CD4-positive, alpha-beta T cell (primary cell): ENCODE measurements at regions of chr15 and their contacts with region 1.

Region 1: GRCh38 chr15:85380217-85380811 is at the start of gene AKAP13:
- DNase-seq: peak; percentile 81 to 99 (median 92)
- ATAC-seq: peak; percentile 74
- H3K4me3 ChIP-seq: peak within 1 kb of the TSS; percentile 67
- H3K4me3 Mint-ChIP-seq: peak within 1 kb of the TSS; percentile 92
- H3K27ac ChIP-seq: peak within 1 kb of the TSS; percentile 63 to 74
- H3K27ac Mint-ChIP-seq: peak within 1 kb of the TSS; percentile 88
- H3K4me1 ChIP-seq: peaks cover 36% of the 10 kb centered on the region
- H3K4me1 Mint-ChIP-seq: peaks cover 46% of the 10 kb centered on the region
- H3K27me3 ChIP-seq: no peaks in the 10 kb centered on the region
- H3K27me3 Mint-ChIP-seq: no peaks in the 10 kb centered on the region
- CTCF ChIP-seq: no peak
- total RNA-seq, gene AKAP13: 282 to 304 TPM

Region 2: GRCh38 chr15:85330901-85331588 is 49.3 kb before region 1 on chr15:
- CTCF ChIA-PET with region 1: interaction called, 11 read pairs
- POLR2A ChIA-PET with region 1: interaction called, 70 read pairs
- intact Hi-C with region 1: loop called (anchors 2 to 5 kb)
- DNase-seq: peak; percentile 46 to 88 (median 60)
- ATAC-seq: peak; percentile 71
- H3K4me3 ChIP-seq: peak overlapping the region; percentile 47
- H3K4me3 Mint-ChIP-seq: peak overlapping the region; percentile 96
- H3K27ac ChIP-seq: peak overlapping the region; percentile 43 to 60
- H3K27ac Mint-ChIP-seq: peak overlapping the region; percentile 85
- H3K4me1 ChIP-seq: peaks cover 30% of the 10 kb centered on the region
- H3K4me1 Mint-ChIP-seq: peaks cover 58% of the 10 kb centered on the region
- H3K27me3 ChIP-seq: no peaks in the 10 kb centered on the region
- H3K27me3 Mint-ChIP-seq: no peaks in the 10 kb centered on the region
- CTCF ChIP-seq: peak; percentile 57

Region 3: DNA sequence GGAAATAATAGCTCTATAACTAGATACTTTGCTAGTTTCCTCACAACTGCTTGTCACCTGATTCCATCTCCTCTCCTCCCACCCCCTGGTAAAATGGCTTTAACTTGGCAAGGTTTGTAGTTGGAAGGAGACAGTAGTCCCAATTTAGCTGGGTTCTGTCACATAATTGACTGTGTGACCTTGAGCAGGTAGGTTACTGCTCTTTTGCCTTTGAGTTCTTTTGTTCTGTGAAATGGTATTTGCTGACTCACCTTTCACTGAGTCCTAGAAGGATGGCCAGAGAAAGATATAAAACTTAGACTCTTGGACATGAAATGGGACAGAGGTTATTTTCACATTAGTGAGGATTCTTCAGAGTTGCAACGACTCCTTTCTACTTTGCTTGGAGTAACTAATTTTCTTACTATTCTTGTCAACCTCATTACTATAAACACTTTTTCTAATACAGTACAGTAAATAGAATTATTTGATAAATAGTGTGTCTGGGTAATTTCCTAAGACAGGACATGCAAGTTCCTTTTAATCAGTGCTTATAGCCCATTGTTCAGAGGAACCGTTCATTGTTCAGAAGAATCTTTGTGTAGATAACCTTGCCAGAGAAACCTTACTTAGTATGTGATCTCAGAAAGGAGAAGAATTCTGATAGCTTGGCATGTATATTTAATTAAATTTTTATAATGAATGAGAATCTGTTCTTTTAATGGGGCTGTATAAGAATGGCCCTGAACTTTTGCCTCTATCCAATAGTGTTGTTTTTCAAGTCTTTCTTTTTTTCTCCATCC is 14.4 kb after region 1 on chr15:
- CTCF ChIA-PET with region 1: interaction called, 3 read pairs
- POLR2A ChIA-PET with region 1: interaction called, 14 read pairs
- intact Hi-C with region 1: no loop called
- DNase-seq: no peak
- ATAC-seq: no peak
- H3K4me3 ChIP-seq: no peak overlapping the region
- H3K4me3 Mint-ChIP-seq: no peak overlapping the region
- H3K27ac ChIP-seq: no peak overlapping the region
- H3K27ac Mint-ChIP-seq: no peak overlapping the region
- H3K4me1 ChIP-seq: no peaks in the 10 kb centered on the region
- H3K4me1 Mint-ChIP-seq: peaks cover 66% of the 10 kb centered on the region
- H3K27me3 ChIP-seq: no peaks in the 10 kb centered on the region
- H3K27me3 Mint-ChIP-seq: no peaks in the 10 kb centered on the region
- CTCF ChIP-seq: no peak

Region 4: DNA sequence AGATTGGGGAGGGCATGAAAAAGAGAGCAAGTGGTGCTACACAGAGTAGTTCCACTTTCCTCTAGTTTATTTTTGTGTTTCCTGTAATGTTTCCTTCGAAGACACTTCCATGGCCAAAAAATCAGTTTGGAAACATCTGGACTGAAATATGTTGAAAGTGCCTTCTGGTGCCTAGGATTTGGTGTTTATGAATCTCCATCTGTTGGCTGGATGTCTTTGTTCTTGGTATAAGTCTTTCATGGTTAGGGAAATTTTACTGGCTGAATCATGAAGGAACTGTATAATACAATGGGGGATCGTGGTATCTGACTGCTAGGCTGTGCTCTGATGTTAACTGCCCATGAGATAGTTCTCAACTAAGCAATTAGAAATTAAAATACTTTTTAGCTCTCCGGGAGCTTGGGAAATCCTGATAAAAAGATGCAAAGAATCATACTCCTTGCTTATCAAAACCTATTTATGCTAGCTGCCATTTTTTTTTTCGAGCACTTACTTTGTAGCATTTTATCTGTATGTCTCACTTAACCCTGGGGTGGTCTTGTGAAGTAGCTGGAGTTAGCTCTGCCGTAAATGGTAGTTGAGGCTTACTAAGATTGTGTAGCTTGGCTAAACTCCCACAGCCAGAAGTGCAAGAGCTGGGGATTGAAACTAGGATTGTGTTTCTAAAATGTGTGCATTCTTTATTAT is 22.0 kb after region 1 on chr15:
- CTCF ChIA-PET with region 1: interaction called, 3 read pairs
- POLR2A ChIA-PET with region 1: interaction called, 15 read pairs
- intact Hi-C with region 1: no loop called
- DNase-seq: peak in 1 of 14 experiments; percentile 25
- ATAC-seq: no peak
- H3K4me3 ChIP-seq: no peak overlapping the region
- H3K4me3 Mint-ChIP-seq: no peak overlapping the region
- H3K27ac ChIP-seq: no peak overlapping the region
- H3K27ac Mint-ChIP-seq: peak overlapping the region; percentile 31
- H3K4me1 ChIP-seq: peaks cover 30% of the 10 kb centered on the region
- H3K4me1 Mint-ChIP-seq: peaks cover 90% of the 10 kb centered on the region
- H3K27me3 ChIP-seq: no peaks in the 10 kb centered on the region
- H3K27me3 Mint-ChIP-seq: no peaks in the 10 kb centered on the region
- CTCF ChIP-seq: no peak

Region 5: GRCh38 chr15:85407804-85408746 is 27.8 kb after region 1 on chr15:
- CTCF ChIA-PET with region 1: interaction called, 6 read pairs
- POLR2A ChIA-PET with region 1: interaction called, 48 read pairs
- intact Hi-C with region 1: loop called in 1 of 2 experiments (anchors 2 kb)
- DNase-seq: peak in 6 of 14 experiments; percentile 11 to 64 (median 45)
- ATAC-seq: peak; percentile 80
- H3K4me3 ChIP-seq: no peak overlapping the region
- H3K4me3 Mint-ChIP-seq: peak overlapping the region; percentile 65
- H3K27ac ChIP-seq: peak overlapping the region in 1 of 2 donors; percentile 38
- H3K27ac Mint-ChIP-seq: peak overlapping the region; percentile 75
- H3K4me1 ChIP-seq: peaks cover 33% of the 10 kb centered on the region
- H3K4me1 Mint-ChIP-seq: peaks cover 78% of the 10 kb centered on the region
- H3K27me3 ChIP-seq: no peaks in the 10 kb centered on the region
- H3K27me3 Mint-ChIP-seq: no peaks in the 10 kb centered on the region
- CTCF ChIP-seq: no peak

Region 6: DNA sequence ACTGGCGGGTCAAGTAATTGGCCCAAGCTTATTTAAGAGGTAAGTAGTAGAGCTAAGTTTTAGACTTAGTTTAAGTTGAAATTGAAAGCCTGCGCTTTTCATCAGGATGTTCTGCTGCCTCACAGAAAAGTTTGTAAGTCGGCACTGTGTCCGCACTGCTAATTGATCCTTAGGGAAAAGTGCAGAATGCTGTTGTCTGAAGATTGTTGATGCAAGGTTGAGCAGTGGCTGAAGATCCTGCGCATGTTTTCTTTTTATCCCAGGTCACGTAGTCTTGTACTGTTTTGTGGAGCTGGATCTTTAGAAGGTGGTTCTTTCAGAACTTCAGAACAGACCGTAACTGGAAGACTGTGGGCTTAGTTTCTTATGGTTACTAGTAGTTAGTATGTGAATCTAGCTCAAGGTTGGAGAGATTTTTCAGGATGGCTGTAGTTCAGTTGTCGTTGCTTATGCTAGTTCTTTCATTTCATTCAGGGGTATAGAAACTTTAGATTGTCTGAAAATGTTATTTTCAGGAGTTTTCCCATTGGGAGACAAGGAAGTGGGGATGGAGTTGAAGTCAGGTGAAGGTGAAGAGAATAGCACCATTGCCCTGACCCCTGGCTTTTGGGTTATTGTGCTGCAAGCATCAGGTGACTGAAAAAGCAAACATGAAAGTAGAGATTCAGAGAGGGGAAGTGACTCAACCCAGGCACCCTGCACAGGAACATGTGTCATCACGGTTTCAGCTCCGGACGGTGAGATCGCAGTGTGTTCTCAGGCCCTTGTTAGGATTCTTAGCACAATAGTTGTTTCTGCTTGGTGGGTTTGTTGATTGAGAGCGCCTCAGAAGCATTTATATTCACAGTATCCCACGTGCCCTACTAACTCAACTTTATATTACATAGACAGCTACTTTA is 32.9 kb after region 1 on chr15:
- CTCF ChIA-PET with region 1: interaction called, 6 read pairs
- POLR2A ChIA-PET with region 1: interaction called, 48 read pairs
- intact Hi-C with region 1: loop called in 1 of 2 experiments (anchors 2 kb)
- DNase-seq: peak; percentile 45 to 89 (median 66)
- ATAC-seq: peak; percentile 96
- H3K4me3 ChIP-seq: no peak overlapping the region
- H3K4me3 Mint-ChIP-seq: peak overlapping the region; percentile 52
- H3K27ac ChIP-seq: peak overlapping the region; percentile 51 to 68
- H3K27ac Mint-ChIP-seq: peak overlapping the region; percentile 82
- H3K4me1 ChIP-seq: peaks cover 14% of the 10 kb centered on the region
- H3K4me1 Mint-ChIP-seq: peaks cover 64% of the 10 kb centered on the region
- H3K27me3 ChIP-seq: no peaks in the 10 kb centered on the region
- H3K27me3 Mint-ChIP-seq: no peaks in the 10 kb centered on the region
- CTCF ChIP-seq: no peak

Region 7: DNA sequence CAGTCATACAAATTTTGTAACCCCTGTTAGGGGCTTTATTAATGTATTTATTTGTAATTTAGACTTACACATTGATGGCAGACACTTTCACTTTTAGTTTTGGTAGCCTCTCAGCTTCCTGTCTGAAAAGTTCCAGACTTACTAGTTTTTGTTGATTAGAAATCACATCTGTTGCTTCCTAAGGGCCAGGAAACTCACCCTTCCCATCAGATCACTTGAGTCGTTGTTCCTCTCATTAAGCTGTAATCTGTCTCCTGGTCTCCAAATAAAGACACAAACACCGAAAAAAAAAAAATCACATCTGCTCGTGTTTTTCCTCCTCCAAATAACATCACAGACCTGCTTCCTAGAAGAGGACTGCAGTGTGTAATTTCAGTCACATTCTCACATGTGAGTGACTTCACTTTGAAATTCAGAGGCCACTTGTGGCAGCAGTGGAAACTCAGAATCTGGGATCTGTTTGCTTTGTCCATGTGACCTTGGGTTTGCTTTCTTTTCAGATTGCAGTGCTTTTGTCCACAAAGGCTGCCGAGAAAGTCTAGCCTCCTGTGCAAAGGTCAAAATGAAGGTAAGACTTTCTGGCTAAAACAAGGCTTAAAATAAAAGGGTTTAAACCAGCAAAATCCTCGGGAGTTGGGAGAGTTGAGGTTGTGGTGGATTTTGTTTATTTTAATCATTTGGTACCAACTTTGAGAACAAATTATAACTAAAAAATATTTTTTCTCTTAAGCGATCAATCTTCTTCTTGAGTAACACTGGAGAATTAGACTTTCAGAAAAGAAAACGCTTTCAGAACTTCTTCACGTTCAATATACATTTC is 327.4 kb after region 1 on chr15:
- CTCF ChIA-PET with region 1: no interaction called
- POLR2A ChIA-PET with region 1: interaction called, 3 read pairs
- intact Hi-C with region 1: loop called in 1 of 2 experiments (anchors 10 kb)
- DNase-seq: peak in 2 of 14 experiments; percentile 56 to 80
- ATAC-seq: peak; percentile 39
- H3K4me3 ChIP-seq: peak overlapping the region; percentile 45
- H3K4me3 Mint-ChIP-seq: peak overlapping the region; percentile 75
- H3K27ac ChIP-seq: peak overlapping the region; percentile 80 to 88
- H3K27ac Mint-ChIP-seq: peak overlapping the region; percentile 98
- H3K4me1 ChIP-seq: peaks cover 54% of the 10 kb centered on the region
- H3K4me1 Mint-ChIP-seq: peaks cover 87% of the 10 kb centered on the region
- H3K27me3 ChIP-seq: no peaks in the 10 kb centered on the region
- H3K27me3 Mint-ChIP-seq: no peaks in the 10 kb centered on the region
- CTCF ChIP-seq: no peak